Activated CD4-positive, alpha-beta T cell treated with anti-CD3 and anti-CD28 coated beads, Interleukin-2, amount 10 ng/mL, durations not matched to agents 7 days and 5 days (primary cell): ENCODE measurements at regions of chr22 and their contacts with region 1.

Region 1: DNA sequence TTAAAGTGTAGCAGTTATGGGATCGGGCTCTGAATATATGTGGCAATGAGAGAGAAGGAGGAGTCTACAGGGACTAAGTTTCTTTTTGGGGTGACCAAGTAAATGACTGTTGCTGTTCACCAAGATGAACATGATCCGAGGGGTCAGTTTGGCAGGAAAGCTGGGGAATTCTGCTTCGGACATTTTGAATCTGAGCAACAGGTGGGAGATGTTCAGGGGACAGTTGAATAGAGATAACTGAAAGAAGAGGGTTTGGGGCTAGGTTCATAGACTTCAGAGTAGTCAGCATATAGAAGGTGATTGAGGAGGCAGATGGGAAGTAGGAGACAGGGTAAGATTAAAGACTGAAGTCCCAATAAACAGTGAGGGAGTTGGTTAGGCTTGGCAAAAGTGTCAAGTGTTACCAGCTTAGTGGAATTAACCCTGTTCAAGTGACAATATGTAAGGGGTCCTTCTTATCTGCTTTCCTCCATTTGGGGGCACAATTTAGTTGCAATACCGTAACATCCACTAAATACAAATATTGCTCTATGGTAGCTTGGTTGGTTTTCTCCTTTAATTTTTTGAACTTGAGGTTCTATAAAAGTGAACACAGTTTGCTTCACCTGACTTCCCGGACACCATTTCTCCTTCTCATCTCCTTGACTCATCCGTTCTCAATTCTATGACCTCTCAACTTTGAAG is 2.9 kb upstream of the ENTHD1 start:
- DNase-seq: no peak
- H3K4me3 Mint-ChIP-seq: no peak overlapping the region
- H3K27ac Mint-ChIP-seq: no peak overlapping the region
- H3K4me1 Mint-ChIP-seq: peaks cover 28% of the 10 kb centered on the region
- H3K27me3 Mint-ChIP-seq: no peaks in the 10 kb centered on the region

Region 2: GRCh38 chr22:39880722-39881121 is 15.7 kb before region 1 on chr22:
- CTCF ChIA-PET with region 1: interaction called, 16 read pairs
- POLR2A ChIA-PET with region 1: no interaction called
- DNase-seq: no peak
- H3K4me3 Mint-ChIP-seq: no peak overlapping the region
- H3K27ac Mint-ChIP-seq: no peak overlapping the region
- H3K4me1 Mint-ChIP-seq: no peaks in the 10 kb centered on the region
- H3K27me3 Mint-ChIP-seq: peaks cover 2% of the 10 kb centered on the region